CD4-positive, alpha-beta T cell (primary cell): ENCODE measurements at regions of chr12 and their contacts with region 1.

Region 1: DNA sequence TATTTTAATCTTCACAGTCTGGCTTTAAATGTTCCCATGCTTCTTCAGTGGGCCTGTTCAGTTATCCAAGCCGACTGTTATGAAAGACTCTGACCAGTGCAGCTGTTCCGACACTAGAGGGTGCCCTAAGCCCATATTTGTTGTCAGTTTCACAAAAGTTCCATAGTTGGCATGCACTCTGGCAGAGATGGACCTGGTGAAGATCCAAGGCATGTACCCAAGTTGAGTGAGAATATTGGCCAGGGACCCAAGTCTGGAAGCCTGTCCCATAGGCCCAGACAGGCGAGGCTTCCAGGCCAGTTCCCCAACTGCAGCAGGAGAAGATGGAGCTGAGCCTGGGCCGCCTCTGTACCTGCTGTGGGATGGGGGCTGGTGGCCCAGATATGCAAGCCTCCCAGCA is 27.4 kb upstream of the GUCY2C start:
- DNase-seq: peak; percentile 21 to 80 (median 46)
- ATAC-seq: peak; percentile 76
- H3K4me3 ChIP-seq: no peak overlapping the region
- H3K4me3 Mint-ChIP-seq: no peak overlapping the region
- H3K27ac ChIP-seq: no peak overlapping the region
- H3K27ac Mint-ChIP-seq: no peak overlapping the region
- H3K4me1 ChIP-seq: no peaks in the 10 kb centered on the region
- H3K4me1 Mint-ChIP-seq: peaks cover 5% of the 10 kb centered on the region
- H3K27me3 ChIP-seq: no peaks in the 10 kb centered on the region
- H3K27me3 Mint-ChIP-seq: peaks cover 11% of the 10 kb centered on the region
- CTCF ChIP-seq: peak; percentile 81

Region 2: GRCh38 chr12:14845350-14845750 is 121.6 kb after region 1 on chr12:
- CTCF ChIA-PET with region 1: no interaction called
- POLR2A ChIA-PET with region 1: no interaction called
- intact Hi-C with region 1: loop called (anchors 2 to 5 kb)
- DNase-seq: peak in 12 of 14 experiments; percentile 8 to 74 (median 34)
- ATAC-seq: peak; percentile 68
- H3K4me3 ChIP-seq: no peak overlapping the region
- H3K4me3 Mint-ChIP-seq: no peak overlapping the region
- H3K27ac ChIP-seq: no peak overlapping the region
- H3K27ac Mint-ChIP-seq: no peak overlapping the region
- H3K4me1 ChIP-seq: peaks cover 3% of the 10 kb centered on the region
- H3K4me1 Mint-ChIP-seq: peaks cover 9% of the 10 kb centered on the region
- H3K27me3 ChIP-seq: no peaks in the 10 kb centered on the region
- H3K27me3 Mint-ChIP-seq: no peaks in the 10 kb centered on the region
- CTCF ChIP-seq: peak; percentile 79

Region 3: DNA sequence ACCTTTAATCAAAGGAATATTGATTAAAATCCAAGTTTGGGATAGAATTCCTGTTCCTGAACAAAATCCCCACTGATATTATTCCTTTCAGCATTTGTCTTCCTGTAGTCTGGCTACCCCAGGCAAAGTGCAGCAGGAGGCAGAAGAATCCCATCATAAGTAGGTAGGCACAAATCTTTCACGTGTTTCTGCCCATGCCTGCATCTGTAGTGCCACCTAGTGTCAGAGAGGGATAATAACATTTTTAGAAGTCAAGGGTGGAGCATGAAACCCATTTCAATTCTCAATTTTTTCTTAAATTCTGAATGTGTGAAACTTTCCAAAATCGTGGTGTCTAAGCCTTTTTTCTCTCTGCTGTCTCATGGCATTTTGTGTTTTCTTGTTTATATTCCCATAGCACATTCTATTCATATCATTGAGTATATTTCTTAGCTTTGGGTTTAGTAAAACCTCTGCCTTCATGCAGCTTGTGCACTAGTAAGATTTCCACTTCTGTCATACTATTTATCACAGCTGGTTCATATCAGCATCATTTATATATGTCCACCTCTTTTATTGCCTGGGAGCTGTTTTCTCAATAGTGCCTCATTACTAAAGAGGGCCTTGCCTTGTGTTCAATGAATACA is 545.3 kb after region 1 on chr12:
- CTCF ChIA-PET with region 1: no interaction called
- POLR2A ChIA-PET with region 1: no interaction called
- intact Hi-C with region 1: loop called (anchors 1 to 2 kb)
- DNase-seq: peak in 11 of 14 experiments; percentile 3 to 74 (median 15)
- ATAC-seq: peak; percentile 77
- H3K4me3 ChIP-seq: no peak overlapping the region
- H3K4me3 Mint-ChIP-seq: no peak overlapping the region
- H3K27ac ChIP-seq: no peak overlapping the region
- H3K27ac Mint-ChIP-seq: no peak overlapping the region
- H3K4me1 ChIP-seq: no peaks in the 10 kb centered on the region
- H3K4me1 Mint-ChIP-seq: no peaks in the 10 kb centered on the region
- H3K27me3 ChIP-seq: peaks cover 2 to 5% of the 10 kb centered on the region in 2 experiments
- H3K27me3 Mint-ChIP-seq: peaks cover 9% of the 10 kb centered on the region
- CTCF ChIP-seq: peak; percentile 88

Region 4: GRCh38 chr12:15584366-15585041 is 860.7 kb after region 1 on chr12:
- CTCF ChIA-PET with region 1: no interaction called
- POLR2A ChIA-PET with region 1: no interaction called
- intact Hi-C with region 1: loop called in 1 of 2 experiments (anchors 5 kb)
- DNase-seq: peak in 8 of 14 experiments; percentile 7 to 85 (median 44)
- ATAC-seq: peak; percentile 61
- H3K4me3 ChIP-seq: no peak overlapping the region
- H3K4me3 Mint-ChIP-seq: no peak overlapping the region
- H3K27ac ChIP-seq: no peak overlapping the region
- H3K27ac Mint-ChIP-seq: no peak overlapping the region
- H3K4me1 ChIP-seq: no peaks in the 10 kb centered on the region
- H3K4me1 Mint-ChIP-seq: peaks cover 18% of the 10 kb centered on the region
- H3K27me3 ChIP-seq: no peaks in the 10 kb centered on the region
- H3K27me3 Mint-ChIP-seq: no peaks in the 10 kb centered on the region
- CTCF ChIP-seq: peak; percentile 77